GM12878 (cell line): ENCODE measurements at regions of chr12 and their contacts with region 1.

Region 1: DNA sequence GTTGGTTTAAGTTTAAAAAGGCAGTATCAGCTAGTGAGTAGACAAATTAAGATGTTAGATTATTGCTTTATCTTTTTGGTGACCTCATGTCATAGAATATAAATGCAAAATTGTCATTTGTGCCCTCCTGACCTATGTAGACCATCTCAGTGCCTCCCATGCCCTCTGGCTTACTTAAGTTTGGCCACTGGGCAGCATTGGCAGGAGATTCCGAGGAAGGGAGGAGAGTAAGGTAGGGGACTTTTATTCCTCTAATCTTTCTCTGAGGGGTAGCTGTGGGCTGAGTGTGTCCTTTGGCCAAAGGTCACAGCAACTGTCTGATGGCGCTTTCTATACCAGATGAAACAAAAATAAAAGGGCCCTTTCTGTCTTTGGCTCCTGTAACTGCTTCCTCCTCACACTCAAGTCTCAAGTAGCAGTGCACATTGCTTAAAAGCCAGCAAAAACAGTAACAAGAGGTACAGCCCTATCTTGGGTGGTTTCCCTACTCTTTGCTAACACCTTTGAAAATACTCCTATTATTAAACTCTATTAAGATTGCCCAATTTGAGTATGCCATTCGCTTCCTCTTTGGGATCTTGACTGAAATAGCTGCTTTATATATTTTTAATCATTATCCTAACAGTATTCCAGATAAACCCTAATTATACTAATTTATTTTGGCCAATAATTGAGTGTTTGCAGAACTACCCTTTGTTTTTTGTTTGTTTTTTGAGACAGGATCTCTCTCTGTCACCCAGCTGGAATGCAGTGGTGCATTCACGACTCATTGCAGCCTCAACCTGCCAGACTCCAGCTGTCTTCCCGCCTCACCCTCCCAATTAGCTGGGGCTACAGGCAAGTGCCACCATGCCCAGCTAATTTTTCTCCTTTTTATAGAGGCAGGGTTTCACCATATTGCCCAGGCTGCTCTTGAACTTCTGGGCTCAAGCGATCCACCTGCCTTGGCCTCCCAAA is 56.5 kb upstream of the KCNH3 start:
- DNase-seq: no peak
- ATAC-seq: peak; percentile 54
- H3K4me3 ChIP-seq: no peak overlapping the region
- H3K27ac ChIP-seq: no peak overlapping the region
- H3K4me1 ChIP-seq: peaks cover 2% of the 10 kb centered on the region
- H3K27me3 ChIP-seq: no peaks in the 10 kb centered on the region
- CTCF ChIP-seq: no peak
- EP300 ChIP-seq: no peak
- POLR2A ChIP-seq: no peak
- RAD21 ChIP-seq: no peak

Region 2: DNA sequence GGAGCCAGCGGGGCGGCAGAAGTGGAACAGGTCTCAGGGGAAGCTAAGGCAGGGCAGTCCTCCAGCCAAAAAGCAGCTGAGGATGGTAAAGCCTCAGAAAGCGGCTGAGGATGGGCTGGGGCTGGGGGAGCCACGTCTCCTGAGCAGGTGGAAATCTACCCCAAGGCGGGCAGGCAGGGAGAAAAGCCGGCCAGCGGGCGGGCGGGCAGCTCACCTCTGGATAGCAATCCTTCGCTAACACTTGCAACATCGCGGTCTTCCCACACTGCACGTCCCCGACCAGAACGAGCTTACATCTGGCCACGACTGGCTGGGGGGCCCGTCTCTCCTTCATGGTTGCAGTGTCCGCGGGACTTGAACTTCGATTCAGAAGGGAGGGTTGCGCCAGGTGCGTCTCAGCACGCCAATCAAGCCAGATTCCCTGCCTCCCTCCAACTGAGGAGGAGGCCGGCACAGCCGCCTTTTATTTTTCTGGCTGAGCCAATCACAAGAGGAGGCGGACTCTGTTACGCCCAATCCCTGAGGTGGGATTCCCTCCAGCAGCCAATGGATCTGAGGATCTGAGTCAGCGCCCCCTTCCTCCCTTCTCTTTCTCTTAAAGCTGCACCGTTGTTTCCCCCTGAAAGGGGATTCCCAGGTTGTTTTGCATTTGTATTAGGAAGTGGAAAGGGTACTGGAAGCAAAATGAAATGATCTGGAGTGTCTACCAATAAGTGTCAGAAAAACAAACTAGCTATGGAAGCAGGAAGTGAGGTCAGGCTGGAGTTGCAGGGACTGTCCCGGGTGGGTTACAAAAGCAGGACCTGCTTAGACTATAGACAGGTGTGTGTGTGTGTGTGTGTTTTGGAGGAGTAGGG is 616.7 kb before region 1 on chr12 and contains the start of gene RND1:
- CTCF ChIA-PET with region 1: no interaction called
- POLR2A ChIA-PET with region 1: no interaction called
- RAD21 ChIA-PET with region 1: no interaction called
- SMC1A ChIA-PET with region 1: no interaction called
- in situ Hi-C with region 1: no loop called
- intact Hi-C with region 1: no loop called
- DNase-seq: peak; percentile 89
- ATAC-seq: peak; percentile 95
- H3K4me3 ChIP-seq: peak within 1 kb of the TSS; percentile 79
- H3K27ac ChIP-seq: peak within 1 kb of the TSS; percentile 49
- H3K4me1 ChIP-seq: peaks cover 12% of the 10 kb centered on the region
- H3K27me3 ChIP-seq: no peaks in the 10 kb centered on the region
- CTCF ChIP-seq: 0 out of 6 replicates have a peak, but pooled peaks of 1 of the 3 experiments have one; percentile 5
- EP300 ChIP-seq: no peak
- POLR2A ChIP-seq: peak; percentile 99
- RAD21 ChIP-seq: no peak
- polyA plus RNA-seq, gene RND1: 0.24 to 0.42 TPM

Region 3: DNA sequence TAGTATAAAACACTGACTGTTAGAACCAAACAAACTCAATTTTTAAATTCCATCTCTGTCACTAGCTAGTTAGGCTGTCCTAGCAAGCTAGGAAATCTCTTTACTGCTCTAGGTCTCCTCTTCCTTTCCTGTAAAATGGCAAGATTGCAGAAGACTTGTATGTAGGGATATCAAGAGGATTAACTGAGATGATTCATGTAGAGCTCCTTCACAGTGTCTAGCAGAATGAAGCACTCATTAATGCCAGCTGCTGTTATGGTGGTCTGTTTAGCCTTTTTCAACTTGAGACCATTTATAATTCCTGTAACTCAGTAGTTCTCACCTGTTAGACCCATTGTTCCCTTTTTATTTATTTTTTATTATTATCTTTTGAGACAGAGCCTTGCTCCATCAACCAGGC is 11.4 kb before region 1 on chr12:
- CTCF ChIA-PET with region 1: interaction called, 6 read pairs
- POLR2A ChIA-PET with region 1: interaction called, 6 read pairs
- RAD21 ChIA-PET with region 1: interaction called, 5 read pairs
- SMC1A ChIA-PET with region 1: interaction called, 29 read pairs
- in situ Hi-C with region 1: no loop called
- intact Hi-C with region 1: no loop called
- DNase-seq: no peak
- ATAC-seq: peak; percentile 40
- H3K4me3 ChIP-seq: no peak overlapping the region
- H3K27ac ChIP-seq: no peak overlapping the region
- H3K4me1 ChIP-seq: no peaks in the 10 kb centered on the region
- H3K27me3 ChIP-seq: no peaks in the 10 kb centered on the region
- CTCF ChIP-seq: no peak
- EP300 ChIP-seq: no peak
- POLR2A ChIP-seq: no peak
- RAD21 ChIP-seq: no peak

Region 4: DNA sequence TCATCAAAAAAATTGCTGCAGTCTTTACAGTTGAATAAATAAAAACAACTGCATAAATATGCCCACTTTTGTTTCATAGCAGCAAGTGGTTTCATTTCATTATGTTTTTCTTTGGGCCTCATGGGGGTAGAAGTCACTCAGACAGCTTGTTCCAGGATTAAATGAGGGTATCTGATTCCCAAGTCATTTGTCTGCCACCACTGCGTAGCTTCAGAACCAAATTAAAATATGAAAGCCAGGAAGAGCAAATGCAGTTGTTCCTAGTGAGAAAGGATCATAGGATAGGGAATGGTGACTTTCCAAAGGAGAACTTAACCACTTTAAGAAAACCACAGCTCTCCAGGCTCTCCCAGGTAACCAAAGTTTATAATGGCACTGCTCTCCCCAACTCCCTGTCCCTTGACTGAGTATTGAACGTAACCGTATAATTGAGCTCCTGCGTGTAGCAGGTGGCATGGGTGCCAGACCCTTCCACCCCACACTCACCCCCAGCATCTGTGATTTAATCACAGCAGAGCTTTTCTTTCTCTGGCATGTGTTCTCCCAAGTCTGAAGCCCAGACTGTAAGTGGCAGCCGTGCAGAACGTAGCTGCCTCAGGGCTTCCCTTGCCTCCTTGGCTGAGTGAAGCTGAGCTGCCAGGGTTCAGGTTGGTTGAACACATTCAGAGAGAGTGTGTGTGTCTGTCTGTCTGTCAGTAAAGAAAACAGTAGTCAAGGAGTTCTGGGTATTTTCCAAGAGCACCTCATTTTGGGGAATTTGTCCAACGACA is 45.2 kb after region 1 on chr12:
- CTCF ChIA-PET with region 1: no interaction called
- POLR2A ChIA-PET with region 1: interaction called, 10 read pairs
- RAD21 ChIA-PET with region 1: no interaction called
- SMC1A ChIA-PET with region 1: no interaction called
- in situ Hi-C with region 1: no loop called
- intact Hi-C with region 1: no loop called
- DNase-seq: no peak
- ATAC-seq: no peak
- H3K4me3 ChIP-seq: no peak overlapping the region
- H3K27ac ChIP-seq: no peak overlapping the region
- H3K4me1 ChIP-seq: no peaks in the 10 kb centered on the region
- H3K27me3 ChIP-seq: no peaks in the 10 kb centered on the region
- CTCF ChIP-seq: no peak
- EP300 ChIP-seq: no peak
- POLR2A ChIP-seq: no peak
- RAD21 ChIP-seq: no peak